Dorsolateral prefrontal cortex (tissue), 120 donors: ENCODE measurements at regions of chr20 and their contacts with region 1.

Region 1: DNA sequence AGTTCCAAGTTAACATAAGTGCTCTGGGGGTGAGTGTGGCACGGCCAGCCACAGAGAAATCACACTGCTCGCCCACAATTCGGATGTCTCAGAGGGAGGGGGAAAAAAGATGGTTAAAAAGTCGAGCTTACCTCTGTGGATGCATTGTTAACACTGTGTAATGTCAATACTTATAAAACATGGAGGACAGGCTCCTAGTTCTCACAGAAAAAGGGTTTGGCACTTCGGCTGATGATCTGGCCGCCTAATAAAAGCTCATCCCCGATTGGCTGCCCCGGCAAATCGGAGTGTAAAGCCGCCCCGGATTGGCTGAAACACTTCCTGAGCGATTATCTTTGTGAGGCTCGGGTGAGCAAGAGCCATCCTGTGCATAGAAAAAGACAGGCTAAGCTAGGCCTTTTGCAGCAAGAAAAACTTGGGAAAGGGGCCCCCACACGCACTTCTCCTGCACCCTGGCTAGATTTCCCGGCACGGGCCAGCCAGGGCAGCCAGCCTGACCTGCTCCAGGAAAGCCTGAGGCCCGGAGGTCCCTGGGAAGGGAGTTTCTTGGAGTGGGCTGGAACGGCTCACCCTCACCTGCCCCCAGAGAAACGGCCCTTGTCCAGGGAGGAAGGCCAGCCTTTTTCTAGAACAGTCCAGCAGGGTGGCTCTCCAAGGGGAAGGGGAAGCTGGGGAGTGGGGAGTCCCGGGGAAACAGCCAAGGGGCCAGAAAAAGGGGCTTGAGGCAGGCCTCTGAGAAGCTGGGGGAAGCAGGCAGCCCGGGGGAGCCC is at the start of gene ZMYND8:
- DNase-seq: peak; percentile 94 to 99 (median 96)
- H3K4me3 ChIP-seq: peak within 1 kb of the TSS in 57 of 59 donors; percentile 22 to 64 (median 51)
- H3K27ac ChIP-seq: peak within 1 kb of the TSS; percentile 98 to 100 (median 100)
- H3K27me3 ChIP-seq: no peaks in the 10 kb centered on the region
- CTCF ChIP-seq: peak in 1 of 56 donors; percentile 15
- total RNA-seq, gene ZMYND8: 67.0 to 236 (median 109) TPM

Region 2: GRCh38 chr20:47272893-47273590 is 83.7 kb before region 1 on chr20:
- intact Hi-C with region 1: loop called in 1 of 2 experiments (anchors 10 kb)
- DNase-seq: peak in 2 of 10 donors; percentile 51 to 52
- H3K4me3 ChIP-seq: no peak overlapping the region
- H3K27ac ChIP-seq: peak overlapping the region in 54 of 59 donors; percentile 1 to 91 (median 80)
- H3K27me3 ChIP-seq: no peaks in the 10 kb centered on the region
- CTCF ChIP-seq: peak; percentile 70 to 99 (median 94)

Region 3: DNA sequence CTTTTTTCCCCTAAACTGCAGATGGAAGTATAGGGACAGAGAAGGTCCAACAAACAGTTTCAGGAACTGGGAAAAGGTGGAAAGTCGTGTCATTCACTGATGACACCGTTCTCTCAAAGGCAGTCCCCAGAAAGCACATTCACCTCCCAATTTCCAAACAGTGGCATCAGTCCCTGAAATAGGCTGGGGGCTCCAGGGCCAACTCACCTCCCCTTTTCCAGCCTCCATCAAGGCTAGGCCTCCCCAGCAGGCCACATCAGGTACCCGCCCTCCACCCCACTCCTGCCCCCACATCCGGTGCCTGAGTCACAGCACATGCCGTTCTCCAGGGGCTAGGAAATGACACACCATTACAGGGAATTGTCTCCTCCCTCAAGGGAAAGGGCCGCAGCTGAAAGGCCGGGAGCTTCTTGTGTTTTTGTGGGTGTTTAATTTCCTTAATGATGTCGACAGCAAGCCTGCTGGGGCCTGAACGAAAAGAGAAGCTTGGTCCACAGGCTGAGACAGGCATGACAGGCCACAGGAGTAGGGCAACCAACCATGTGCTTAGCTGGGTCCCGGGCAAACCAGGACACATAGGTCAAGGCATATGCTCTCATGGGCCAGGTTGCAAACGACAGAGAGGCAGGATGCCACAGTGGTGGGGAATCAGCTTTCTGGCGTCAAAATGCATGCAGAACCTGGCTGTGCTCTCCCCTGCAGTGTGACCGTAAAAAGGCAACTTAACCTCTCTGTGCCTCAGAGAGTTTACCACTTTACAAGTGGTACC is 39.4 kb before region 1 on chr20:
- intact Hi-C with region 1: loop called (anchors 2 kb)
- DNase-seq: peak in 6 of 10 donors; percentile 38 to 81 (median 58)
- H3K4me3 ChIP-seq: peak overlapping the region in 9 of 59 donors; percentile 6 to 50 (median 41)
- H3K27ac ChIP-seq: peak overlapping the region; percentile 93 to 100 (median 99)
- H3K27me3 ChIP-seq: no peaks in the 10 kb centered on the region
- CTCF ChIP-seq: no peak

Region 4: GRCh38 chr20:47336129-47336835 is 20.4 kb before region 1 on chr20:
- intact Hi-C with region 1: loop called (anchors 2 kb)
- DNase-seq: peak; percentile 43 to 90 (median 76)
- H3K4me3 ChIP-seq: peak overlapping the region in 49 of 59 donors; percentile 0 to 45 (median 20)
- H3K27ac ChIP-seq: peak overlapping the region; percentile 87 to 100 (median 98)
- H3K27me3 ChIP-seq: no peaks in the 10 kb centered on the region
- CTCF ChIP-seq: peak in 1 of 56 donors; percentile 9

Region 5: GRCh38 chr20:47411161-47411560 is 54.5 kb after region 1 on chr20:
- intact Hi-C with region 1: loop called in 1 of 2 experiments (anchors 2 kb)
- DNase-seq: peak in 2 of 10 donors; percentile 29 to 42
- H3K4me3 ChIP-seq: no peak overlapping the region
- H3K27ac ChIP-seq: peak overlapping the region in 41 of 59 donors; percentile 8 to 83 (median 52)
- H3K27me3 ChIP-seq: no peaks in the 10 kb centered on the region
- CTCF ChIP-seq: no peak